Activated B cell treated with CpG ODN at 0.5 μM for 24 hours (primary cell): ENCODE measurements at regions of chr7 and their contacts with region 1.

Region 1: GRCh38 chr7:155796381-155797261 is 15.6 kb downstream of the SHH start:
- DNase-seq: peak; percentile 71
- ATAC-seq: peak; percentile 85
- H3K4me3 Mint-ChIP-seq: no peak overlapping the region
- H3K27ac Mint-ChIP-seq: no peak overlapping the region
- H3K4me1 Mint-ChIP-seq: peaks cover 10% of the 10 kb centered on the region
- H3K27me3 Mint-ChIP-seq: peaks cover 34% of the 10 kb centered on the region
- CTCF ChIP-seq: peak; percentile 52

Region 2: DNA sequence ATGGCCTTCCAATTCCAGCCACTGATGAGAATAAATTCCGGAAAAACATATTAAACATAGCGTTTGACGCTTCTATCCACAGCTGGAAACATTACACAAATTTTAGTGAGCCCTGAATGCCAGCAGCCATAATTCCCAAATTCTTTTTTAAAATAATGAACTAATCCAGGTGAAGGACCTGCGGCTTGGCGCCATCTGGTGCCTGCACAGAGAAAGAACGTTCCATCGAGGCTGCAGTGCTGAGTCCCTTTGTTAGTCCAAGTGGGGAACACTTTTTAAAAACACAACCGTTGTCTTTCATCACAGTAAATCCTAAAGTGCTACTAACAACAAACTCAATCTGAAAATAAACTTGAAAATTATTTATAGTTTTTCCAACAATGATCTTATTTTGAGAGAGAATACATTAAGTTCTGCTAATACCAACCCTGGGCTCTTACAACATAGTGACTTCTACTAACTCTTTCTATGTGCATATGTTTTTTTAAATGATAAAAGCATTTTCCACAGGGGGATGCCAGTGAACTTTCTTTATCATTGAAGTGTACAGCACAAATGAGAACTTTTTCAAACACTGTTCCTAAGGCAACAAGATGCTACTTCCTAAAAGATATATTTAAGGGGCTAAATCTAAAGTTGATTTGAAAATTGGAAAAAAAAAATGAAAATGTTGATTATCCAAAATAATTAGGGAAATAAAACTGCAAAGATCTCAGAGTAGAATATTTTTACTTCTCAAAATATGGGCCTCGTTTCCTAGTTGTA is 677.0 kb after region 1 on chr7:
- CTCF ChIA-PET with region 1: interaction called, 3 read pairs
- POLR2A ChIA-PET with region 1: no interaction called
- intact Hi-C with region 1: loop called (anchors 2 kb)
- DNase-seq: no peak
- ATAC-seq: no peak
- H3K4me3 Mint-ChIP-seq: no peak overlapping the region
- H3K27ac Mint-ChIP-seq: no peak overlapping the region
- H3K4me1 Mint-ChIP-seq: no peaks in the 10 kb centered on the region
- H3K27me3 Mint-ChIP-seq: peaks cover 11% of the 10 kb centered on the region
- CTCF ChIP-seq: no peak

Region 3: DNA sequence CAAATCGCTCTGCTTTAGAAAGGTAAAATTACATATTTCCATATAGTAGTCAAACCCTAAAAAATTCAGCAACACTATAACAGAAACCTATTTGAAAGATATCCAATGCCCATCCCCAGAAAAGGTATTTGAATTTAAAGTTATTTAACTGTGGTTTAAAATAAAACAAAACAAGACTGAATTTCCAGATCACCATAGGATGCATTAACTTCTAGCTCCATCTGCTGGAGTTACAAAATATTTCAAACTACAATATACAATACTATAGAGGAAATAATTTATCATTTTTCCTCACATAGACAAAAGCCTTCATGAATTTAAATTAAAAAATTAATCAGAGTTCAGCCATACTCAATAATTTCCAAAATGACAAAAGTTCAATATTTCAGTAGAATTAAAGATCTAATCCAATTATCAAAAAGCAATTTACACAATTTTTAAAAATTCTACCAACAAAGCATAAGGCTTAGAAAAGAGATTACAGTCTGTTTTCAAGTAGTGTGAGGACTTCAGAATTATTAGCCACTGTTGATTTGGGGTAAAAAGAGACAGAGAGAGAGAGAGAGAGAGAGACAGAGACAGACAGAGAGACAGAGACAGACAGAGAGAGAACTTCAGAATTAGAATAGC is 1020.4 kb after region 1 on chr7:
- CTCF ChIA-PET with region 1: interaction called, 3 read pairs
- POLR2A ChIA-PET with region 1: no interaction called
- intact Hi-C with region 1: loop called (anchors 1 kb)
- DNase-seq: no peak
- ATAC-seq: no peak
- H3K4me3 Mint-ChIP-seq: no peak overlapping the region
- H3K27ac Mint-ChIP-seq: no peak overlapping the region
- H3K4me1 Mint-ChIP-seq: no peaks in the 10 kb centered on the region
- H3K27me3 Mint-ChIP-seq: no peaks in the 10 kb centered on the region
- CTCF ChIP-seq: peak; percentile 30